Heart left ventricle (tissue), 16 donors: ENCODE measurements at regions of chr4 and their contacts with region 1.

Region 1: DNA sequence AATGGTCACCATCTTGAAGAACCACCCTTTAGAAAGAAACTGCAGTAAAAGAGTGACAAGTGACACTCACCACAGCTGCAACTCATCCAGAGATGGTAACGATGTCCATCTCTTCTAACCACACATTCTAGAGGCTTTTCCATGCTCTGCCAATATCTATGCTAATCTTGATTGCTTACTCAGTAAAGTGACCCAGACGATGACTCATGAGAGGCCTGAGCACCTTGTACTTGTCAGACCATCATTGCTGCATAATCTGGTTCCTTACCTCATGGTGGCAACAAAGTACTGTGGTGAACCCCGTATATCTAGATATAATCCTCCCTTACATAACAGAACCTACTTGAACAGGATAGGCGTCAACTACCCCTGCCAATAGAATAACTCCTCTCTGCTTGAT is 75.6 kb downstream of the CCNG2 start:
- DNase-seq: no peak
- ATAC-seq: no peak
- H3K4me3 ChIP-seq: no peak overlapping the region
- H3K27ac ChIP-seq: no peak overlapping the region
- H3K4me1 ChIP-seq: peaks cover 0 to 5% (median 0%) of the 10 kb centered on the region in 12 donors
- H3K27me3 ChIP-seq: no peaks in the 10 kb centered on the region
- CTCF ChIP-seq: no peak
- POLR2A ChIP-seq: no peak

Region 2: DNA sequence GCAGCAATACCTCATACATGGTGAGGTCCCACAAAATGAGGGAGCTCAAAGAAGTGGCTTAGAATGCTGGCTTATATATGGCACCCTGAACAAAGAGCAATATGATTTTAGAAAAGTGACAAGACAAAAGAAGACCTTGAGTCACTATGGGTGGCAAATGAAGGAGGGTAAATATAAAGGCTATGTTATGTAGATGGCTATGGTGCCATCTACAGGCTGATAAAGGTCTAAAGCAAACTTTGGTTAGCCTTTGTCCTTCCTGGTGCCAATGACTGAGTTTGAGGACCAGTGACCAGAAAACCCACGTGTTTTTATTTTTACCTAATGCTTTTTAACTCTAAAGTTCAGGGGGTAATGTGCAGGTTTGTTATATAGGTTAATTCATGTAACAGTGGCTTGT is 76.2 kb after region 1 on chr4:
- intact Hi-C with region 1: loop called in 1 of 10 experiments (anchors 5 kb)
- DNase-seq: no peak
- ATAC-seq: peak in 2 of 4 donors; percentile 65 to 72
- H3K4me3 ChIP-seq: no peak overlapping the region
- H3K27ac ChIP-seq: no peak overlapping the region
- H3K4me1 ChIP-seq: no peaks in the 10 kb centered on the region
- H3K27me3 ChIP-seq: no peaks in the 10 kb centered on the region
- CTCF ChIP-seq: peak in 11 of 12 donors; percentile 11 to 52 (median 37)
- POLR2A ChIP-seq: no peak

Region 3: GRCh38 chr4:77433418-77433733 is 200.7 kb after region 1 on chr4:
- intact Hi-C with region 1: loop called in 1 of 10 experiments (anchors 10 kb)
- DNase-seq: peak in 1 of 5 donors; percentile 23
- ATAC-seq: peak in 3 of 4 donors; percentile 59 to 85 (median 80)
- H3K4me3 ChIP-seq: peak overlapping the region in 1 of 12 donors; percentile 25
- H3K27ac ChIP-seq: peak overlapping the region in 1 of 12 donors; percentile 31
- H3K4me1 ChIP-seq: peaks cover 0 to 28% (median 7%) of the 10 kb centered on the region in 12 donors
- H3K27me3 ChIP-seq: no peaks in the 10 kb centered on the region
- CTCF ChIP-seq: peak; percentile 39 to 74 (median 58)
- POLR2A ChIP-seq: no peak

Region 4: DNA sequence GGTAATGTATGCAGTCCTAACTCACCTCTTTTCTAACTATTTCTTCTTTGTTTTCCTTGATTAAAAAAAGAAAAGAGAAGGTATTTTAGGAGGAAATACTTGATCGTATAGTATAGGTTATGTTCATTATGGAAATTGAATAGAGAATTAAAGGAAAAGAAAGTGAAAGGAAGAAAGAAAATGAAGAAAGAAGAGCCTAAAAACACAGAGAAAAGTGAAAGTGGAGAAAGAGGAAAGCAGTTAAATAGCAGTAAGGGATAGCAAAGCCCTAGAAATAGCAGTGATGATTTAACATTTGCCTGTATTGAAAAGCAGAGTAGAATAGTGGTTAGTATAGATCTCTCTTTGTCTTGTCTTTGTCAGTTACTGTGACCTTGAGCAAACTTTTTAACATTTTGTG is 667.0 kb after region 1 on chr4:
- intact Hi-C with region 1: no loop called
- DNase-seq: no peak
- ATAC-seq: no peak
- H3K4me3 ChIP-seq: no peak overlapping the region
- H3K27ac ChIP-seq: peak overlapping the region in 1 of 12 donors; percentile 8
- H3K4me1 ChIP-seq: peaks cover 0 to 9% (median 0%) of the 10 kb centered on the region in 12 donors
- H3K27me3 ChIP-seq: no peaks in the 10 kb centered on the region
- CTCF ChIP-seq: no peak
- POLR2A ChIP-seq: no peak